Transverse colon (tissue), 4 donors: ENCODE measurements at regions of chr6 and their contacts with region 1.

Region 1: DNA sequence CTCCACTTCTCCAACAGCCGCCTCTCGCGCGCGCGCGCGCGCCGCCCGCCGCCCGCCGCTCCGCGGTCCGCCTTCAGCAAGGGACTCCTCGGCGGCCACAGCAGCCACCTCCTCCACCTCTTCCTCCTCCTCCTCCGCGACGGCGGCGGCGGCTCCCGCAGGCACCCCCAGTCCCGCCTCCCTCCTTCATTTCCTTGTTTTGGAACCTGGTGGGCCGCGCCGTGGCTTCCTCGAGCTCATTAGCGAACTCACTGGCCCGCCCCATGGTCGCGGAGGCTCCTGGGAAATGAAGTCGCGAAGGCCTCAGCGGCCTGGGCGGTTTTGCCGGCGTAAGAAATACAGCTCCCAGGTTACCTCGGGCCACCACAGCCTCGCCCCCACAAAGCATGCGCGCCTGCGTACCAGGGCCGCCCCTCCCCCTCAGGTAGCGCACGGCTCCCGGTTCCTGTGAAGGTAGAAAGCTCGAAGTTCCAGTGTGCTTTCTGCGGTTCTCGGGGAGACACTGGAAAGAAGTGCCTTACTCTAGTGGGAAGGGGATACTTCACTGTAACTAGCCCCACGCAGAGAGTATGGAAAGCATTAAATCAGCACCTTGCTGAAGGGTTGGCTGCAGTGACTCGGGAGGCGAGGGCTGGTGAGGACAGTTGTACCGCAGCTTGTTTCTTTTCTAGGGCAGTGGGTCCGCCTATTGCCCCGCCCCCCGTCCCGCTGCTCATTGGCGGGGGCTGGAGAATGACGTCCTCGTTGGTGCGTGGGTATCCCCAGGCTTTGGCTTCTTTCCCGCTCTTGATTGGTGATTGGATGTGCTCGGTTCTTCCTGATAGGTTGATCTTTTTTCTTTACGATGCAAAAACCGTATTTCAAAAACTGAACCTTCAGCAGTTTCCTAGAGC is at the start of gene CDK19:
- DNase-seq: peak; percentile 99
- H3K4me3 ChIP-seq: peak within 1 kb of the TSS; percentile 62 to 96 (median 76)
- H3K27ac ChIP-seq: peak within 1 kb of the TSS; percentile 92 to 98 (median 95)
- H3K4me1 ChIP-seq: peaks cover 0 to 23% (median 12%) of the 10 kb centered on the region in 4 donors
- H3K27me3 ChIP-seq: no peaks in the 10 kb centered on the region
- CTCF ChIP-seq: peak in 1 of 5 experiments; percentile 13
- EP300 ChIP-seq: no peak
- POLR2A ChIP-seq: peak; percentile 91
- total RNA-seq, gene CDK19: 7.0 to 18.6 (median 14.7) TPM

Region 2: GRCh38 chr6:108958900-108959770 is 1856.3 kb before region 1 on chr6:
- in situ Hi-C with region 1: no loop called
- intact Hi-C with region 1: no loop called
- DNase-seq: no peak
- H3K4me3 ChIP-seq: no peak overlapping the region
- H3K27ac ChIP-seq: no peak overlapping the region
- H3K4me1 ChIP-seq: no peaks in the 10 kb centered on the region
- H3K27me3 ChIP-seq: no peaks in the 10 kb centered on the region
- CTCF ChIP-seq: no peak
- EP300 ChIP-seq: no peak
- POLR2A ChIP-seq: no peak

Region 3: DNA sequence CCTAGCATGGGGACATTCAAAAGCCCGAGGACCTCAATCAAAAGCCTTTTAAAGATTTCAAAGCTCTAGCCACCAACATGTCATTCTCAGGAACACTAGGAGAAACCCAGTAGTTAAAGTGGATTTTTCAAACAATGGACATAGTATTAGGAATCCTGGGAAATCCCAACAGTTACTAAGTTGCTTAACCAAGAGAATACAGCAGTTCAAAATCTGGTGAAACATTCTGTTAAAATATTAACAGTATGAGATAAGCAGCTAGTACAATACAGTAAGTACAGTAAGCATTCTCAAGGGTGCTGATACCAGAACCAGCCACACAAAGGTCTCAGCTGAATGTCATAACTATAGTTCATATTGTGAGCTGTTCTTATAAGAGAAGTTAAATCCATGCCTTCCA is 68.8 kb before region 1 on chr6:
- in situ Hi-C with region 1: no loop called
- intact Hi-C with region 1: no loop called
- DNase-seq: no peak
- H3K4me3 ChIP-seq: no peak overlapping the region
- H3K27ac ChIP-seq: no peak overlapping the region
- H3K4me1 ChIP-seq: peaks cover 0 to 14% (median 0%) of the 10 kb centered on the region in 4 donors
- H3K27me3 ChIP-seq: no peaks in the 10 kb centered on the region
- CTCF ChIP-seq: no peak
- EP300 ChIP-seq: no peak
- POLR2A ChIP-seq: no peak

Region 4: DNA sequence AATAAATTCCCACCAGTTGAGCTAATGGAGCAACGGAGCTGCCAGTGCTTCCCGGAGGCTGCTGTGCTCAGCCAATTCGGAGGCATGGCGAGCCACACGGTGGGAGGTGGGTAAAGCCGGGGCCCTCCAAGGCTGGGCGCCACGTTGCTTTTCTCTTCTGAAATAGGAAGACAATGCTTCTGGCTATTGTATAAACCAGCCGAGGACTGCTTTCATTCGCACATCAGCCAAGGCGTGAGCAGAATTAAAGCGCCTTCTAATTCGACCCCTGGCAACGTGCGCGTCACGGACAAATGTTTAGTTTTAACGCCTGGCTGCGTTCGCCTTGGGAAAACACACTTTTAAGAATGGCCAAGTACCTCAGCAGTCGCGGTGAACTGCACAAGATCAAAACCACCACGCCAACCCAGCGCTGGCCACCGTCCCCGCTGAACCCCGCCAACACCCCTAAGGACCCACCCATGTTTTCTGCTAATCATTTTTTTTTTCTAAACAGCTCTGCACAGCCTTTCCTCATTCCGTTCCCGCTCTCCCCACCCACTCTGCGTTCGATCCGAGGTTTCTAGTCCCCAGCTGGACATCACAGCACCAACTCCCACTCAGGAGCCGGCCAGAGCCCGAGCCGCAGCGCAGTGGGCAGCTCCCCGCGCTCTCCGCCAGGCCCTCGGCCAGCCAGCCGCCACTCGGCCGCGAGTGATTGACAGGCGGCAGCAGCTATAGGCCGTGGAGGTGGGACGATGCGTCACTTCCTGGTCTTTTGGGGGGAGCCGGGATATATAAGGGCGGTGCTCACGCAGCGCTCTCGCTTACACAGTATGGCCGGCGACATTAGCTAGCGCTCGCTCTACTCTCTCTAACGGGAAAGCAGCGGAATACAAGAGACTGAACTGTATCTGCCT is 58.8 kb after region 1 on chr6 and contains the start of gene AMD1:
- in situ Hi-C with region 1: loop called in 1 of 4 experiments (anchors 10 kb)
- intact Hi-C with region 1: loop called (anchors 2 kb)
- DNase-seq: peak; percentile 97
- H3K4me3 ChIP-seq: peak within 1 kb of the TSS; percentile 78 to 95 (median 90)
- H3K27ac ChIP-seq: peak within 1 kb of the TSS; percentile 94 to 99 (median 97)
- H3K4me1 ChIP-seq: peaks cover 11 to 33% (median 26%) of the 10 kb centered on the region in 4 donors
- H3K27me3 ChIP-seq: no peaks in the 10 kb centered on the region
- CTCF ChIP-seq: peak in 2 of 5 experiments; percentile 6 to 42
- EP300 ChIP-seq: no peak
- POLR2A ChIP-seq: peak; percentile 100
- total RNA-seq, gene AMD1: 50.7 to 86.4 (median 75.1) TPM

Region 5: DNA sequence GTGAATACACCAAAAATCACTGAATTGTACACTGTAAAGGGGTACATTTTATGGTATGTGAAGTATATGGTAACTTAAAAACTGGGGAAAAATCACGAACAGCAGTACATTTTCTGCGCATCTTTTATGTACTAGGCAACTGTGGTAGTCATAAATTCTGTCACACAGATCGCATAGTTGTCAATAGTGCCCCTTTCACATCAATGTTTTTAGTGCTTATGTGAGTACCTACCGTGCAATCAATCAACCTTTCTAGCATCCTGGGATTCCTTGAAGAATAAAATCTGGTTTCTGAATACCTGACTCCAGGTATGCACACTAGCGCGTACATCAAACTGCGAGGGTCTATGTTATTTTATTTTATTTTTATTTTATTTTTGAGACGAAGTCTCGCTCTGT is 165.7 kb after region 1 on chr6:
- in situ Hi-C with region 1: loop called in 1 of 4 experiments (anchors 10 kb)
- intact Hi-C with region 1: no loop called
- DNase-seq: no peak
- H3K4me3 ChIP-seq: peak overlapping the region; percentile 60 to 91 (median 71)
- H3K27ac ChIP-seq: peak overlapping the region; percentile 85 to 93 (median 88)
- H3K4me1 ChIP-seq: peaks cover 7 to 12% (median 10%) of the 10 kb centered on the region in 4 donors
- H3K27me3 ChIP-seq: no peaks in the 10 kb centered on the region
- CTCF ChIP-seq: no peak
- EP300 ChIP-seq: no peak
- POLR2A ChIP-seq: no peak

Region 6: GRCh38 chr6:111011360-111012142 is 196.1 kb after region 1 on chr6:
- in situ Hi-C with region 1: no loop called
- intact Hi-C with region 1: no loop called
- DNase-seq: no peak
- H3K4me3 ChIP-seq: no peak overlapping the region
- H3K27ac ChIP-seq: no peak overlapping the region
- H3K4me1 ChIP-seq: no peaks in the 10 kb centered on the region
- H3K27me3 ChIP-seq: no peaks in the 10 kb centered on the region
- CTCF ChIP-seq: peak; percentile 44 to 55 (median 47)
- EP300 ChIP-seq: no peak
- POLR2A ChIP-seq: no peak